CD4-positive, alpha-beta T cell (primary cell): ENCODE measurements at regions of chr14 and their contacts with region 1.

Region 1: GRCh38 chr14:21241218-21241819 is 27.9 kb downstream of the HNRNPC start:
- DNase-seq: peak in 3 of 14 experiments; percentile 55 to 67 (median 63)
- ATAC-seq: no peak
- H3K4me3 ChIP-seq: no peak overlapping the region
- H3K4me3 Mint-ChIP-seq: no peak overlapping the region
- H3K27ac ChIP-seq: no peak overlapping the region
- H3K27ac Mint-ChIP-seq: peak overlapping the region; percentile 11
- H3K4me1 ChIP-seq: peaks cover 45% of the 10 kb centered on the region
- H3K4me1 Mint-ChIP-seq: peaks cover 75% of the 10 kb centered on the region
- H3K27me3 ChIP-seq: no peaks in the 10 kb centered on the region
- H3K27me3 Mint-ChIP-seq: no peaks in the 10 kb centered on the region
- CTCF ChIP-seq: peak; percentile 66

Region 2: DNA sequence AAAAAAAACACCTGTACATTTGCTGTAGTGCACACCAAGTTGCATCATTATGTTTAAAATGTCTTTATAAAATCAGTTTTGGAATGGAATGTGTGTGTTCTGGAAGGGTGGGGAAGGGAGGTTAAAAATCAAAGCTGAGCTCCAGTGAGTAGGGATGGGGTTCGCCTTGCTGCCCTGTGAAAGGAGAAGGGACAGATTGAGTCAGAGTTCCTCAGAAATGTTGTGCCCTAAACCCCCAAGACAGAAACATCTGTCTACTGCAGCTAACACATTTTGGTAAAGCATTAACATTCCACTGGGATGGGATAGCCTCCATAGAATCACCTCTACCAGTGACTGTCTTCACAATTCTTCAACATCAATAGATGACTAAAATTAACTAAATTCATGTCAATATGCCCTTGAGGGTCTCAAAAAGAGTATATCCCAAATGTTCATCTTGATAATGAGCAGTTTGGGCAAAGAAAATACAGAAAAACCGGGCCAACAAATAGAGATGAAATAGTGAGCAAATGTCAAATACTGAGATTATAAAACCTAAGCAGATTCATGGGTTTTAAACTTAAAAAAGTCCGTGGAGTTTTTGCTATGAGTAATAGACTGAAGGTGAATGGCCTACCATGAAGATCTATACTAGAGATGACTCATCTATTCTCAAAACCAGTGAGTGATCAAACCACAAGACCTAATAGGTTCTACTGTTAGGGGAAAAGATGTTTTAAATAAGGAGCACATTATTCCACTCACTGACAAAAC is 22.5 kb after region 1 on chr14:
- CTCF ChIA-PET with region 1: interaction called, 21 read pairs
- POLR2A ChIA-PET with region 1: interaction called, 7 read pairs
- intact Hi-C with region 1: loop called in 1 of 2 experiments (anchors 2 kb)
- DNase-seq: peak in 3 of 14 experiments; percentile 62 to 78 (median 69)
- ATAC-seq: peak; percentile 69
- H3K4me3 ChIP-seq: peak overlapping the region; percentile 16
- H3K4me3 Mint-ChIP-seq: peak overlapping the region; percentile 94
- H3K27ac ChIP-seq: peak overlapping the region; percentile 33 to 57
- H3K27ac Mint-ChIP-seq: peak overlapping the region; percentile 95
- H3K4me1 ChIP-seq: peaks cover 50% of the 10 kb centered on the region
- H3K4me1 Mint-ChIP-seq: peaks cover 78% of the 10 kb centered on the region
- H3K27me3 ChIP-seq: no peaks in the 10 kb centered on the region
- H3K27me3 Mint-ChIP-seq: no peaks in the 10 kb centered on the region
- CTCF ChIP-seq: no peak

Region 3: GRCh38 chr14:21275261-21275858 is 34.0 kb after region 1 on chr14:
- CTCF ChIA-PET with region 1: no interaction called
- POLR2A ChIA-PET with region 1: no interaction called
- intact Hi-C with region 1: no loop called
- DNase-seq: no peak
- ATAC-seq: no peak
- H3K4me3 ChIP-seq: no peak overlapping the region
- H3K4me3 Mint-ChIP-seq: no peak overlapping the region
- H3K27ac ChIP-seq: no peak overlapping the region
- H3K27ac Mint-ChIP-seq: no peak overlapping the region
- H3K4me1 ChIP-seq: peaks cover 6% of the 10 kb centered on the region
- H3K4me1 Mint-ChIP-seq: peaks cover 5% of the 10 kb centered on the region
- H3K27me3 ChIP-seq: no peaks in the 10 kb centered on the region
- H3K27me3 Mint-ChIP-seq: no peaks in the 10 kb centered on the region
- CTCF ChIP-seq: no peak

Region 4: GRCh38 chr14:21383848-21384493 is 142.7 kb after region 1 on chr14 and contains the start of gene SUPT16H:
- CTCF ChIA-PET with region 1: no interaction called
- POLR2A ChIA-PET with region 1: interaction called, 4 read pairs
- intact Hi-C with region 1: loop called in 1 of 2 experiments (anchors 1 kb)
- DNase-seq: peak; percentile 84 to 97 (median 91)
- ATAC-seq: peak; percentile 91
- H3K4me3 ChIP-seq: peak within 1 kb of the TSS; percentile 82
- H3K4me3 Mint-ChIP-seq: peak within 1 kb of the TSS; percentile 98
- H3K27ac ChIP-seq: peak within 1 kb of the TSS; percentile 83 to 92
- H3K27ac Mint-ChIP-seq: peak within 1 kb of the TSS; percentile 99
- H3K4me1 ChIP-seq: peaks cover 18% of the 10 kb centered on the region
- H3K4me1 Mint-ChIP-seq: peaks cover 47% of the 10 kb centered on the region
- H3K27me3 ChIP-seq: no peaks in the 10 kb centered on the region
- H3K27me3 Mint-ChIP-seq: no peaks in the 10 kb centered on the region
- CTCF ChIP-seq: no peak
- total RNA-seq, gene SUPT16H: 47.8 to 50.8 TPM

Region 5: DNA sequence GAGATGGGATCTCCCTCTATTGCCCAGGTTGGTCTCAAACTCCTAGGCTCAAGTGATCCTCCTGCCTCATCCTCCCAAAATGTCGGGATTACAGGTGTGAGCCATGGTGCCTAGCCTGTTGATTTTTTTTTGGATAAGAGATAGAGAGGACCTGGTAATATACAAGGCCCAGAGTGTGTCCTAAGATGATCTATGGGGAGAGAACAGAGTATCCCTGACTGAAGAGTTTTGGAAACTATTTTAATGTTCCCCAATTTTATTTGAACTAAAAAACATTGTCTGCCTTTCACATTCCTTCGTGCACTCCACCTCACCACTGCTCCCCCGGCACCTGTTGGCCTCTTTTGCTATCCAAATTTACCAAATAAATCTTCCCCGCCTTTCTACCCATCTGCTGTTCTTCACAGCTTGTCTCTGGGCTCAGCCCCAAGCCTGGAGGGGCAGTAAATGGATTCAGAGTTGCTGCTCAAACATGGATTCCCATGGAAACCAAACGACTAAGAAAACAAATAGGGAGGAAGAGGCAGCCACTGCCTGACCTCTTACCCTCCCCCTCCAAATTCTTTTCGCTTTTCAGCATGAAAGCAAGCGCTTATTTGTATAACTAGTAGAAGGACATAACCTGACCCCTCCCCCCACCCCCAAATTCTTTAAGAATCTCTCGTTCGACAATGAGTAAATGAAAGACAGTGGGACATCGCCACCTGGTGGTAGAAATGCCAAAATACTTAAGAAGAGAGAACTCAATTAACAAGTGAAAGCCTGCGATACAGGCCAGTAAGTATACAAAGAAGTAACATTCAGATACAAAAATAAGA is 316.0 kb after region 1 on chr14:
- CTCF ChIA-PET with region 1: no interaction called
- POLR2A ChIA-PET with region 1: no interaction called
- intact Hi-C with region 1: loop called in 1 of 2 experiments (anchors 10 kb)
- DNase-seq: peak; percentile 40 to 91 (median 70)
- ATAC-seq: peak; percentile 70
- H3K4me3 ChIP-seq: peak overlapping the region; percentile 36
- H3K4me3 Mint-ChIP-seq: no peak overlapping the region
- H3K27ac ChIP-seq: no peak overlapping the region
- H3K27ac Mint-ChIP-seq: no peak overlapping the region
- H3K4me1 ChIP-seq: peaks cover 4% of the 10 kb centered on the region
- H3K4me1 Mint-ChIP-seq: peaks cover 6% of the 10 kb centered on the region
- H3K27me3 ChIP-seq: no peaks in the 10 kb centered on the region
- H3K27me3 Mint-ChIP-seq: no peaks in the 10 kb centered on the region
- CTCF ChIP-seq: peak; percentile 80

Region 6: GRCh38 chr14:21575661-21576060 is 334.3 kb after region 1 on chr14:
- CTCF ChIA-PET with region 1: no interaction called
- POLR2A ChIA-PET with region 1: no interaction called
- intact Hi-C with region 1: no loop called
- DNase-seq: no peak
- ATAC-seq: no peak
- H3K4me3 ChIP-seq: no peak overlapping the region
- H3K4me3 Mint-ChIP-seq: no peak overlapping the region
- H3K27ac ChIP-seq: no peak overlapping the region
- H3K27ac Mint-ChIP-seq: no peak overlapping the region
- H3K4me1 ChIP-seq: no peaks in the 10 kb centered on the region
- H3K4me1 Mint-ChIP-seq: no peaks in the 10 kb centered on the region
- H3K27me3 ChIP-seq: peaks cover 0 to 2% of the 10 kb centered on the region in 2 experiments
- H3K27me3 Mint-ChIP-seq: peaks cover 18% of the 10 kb centered on the region
- CTCF ChIP-seq: no peak